Adrenal gland (tissue), 19 donors: ENCODE measurements at regions of chr10 and their contacts with region 1.

Region 1: GRCh38 chr10:119199231-119199992 is 8.0 kb upstream of the GRK5 start:
- DNase-seq: peak; percentile 66 to 86 (median 76)
- H3K4me3 ChIP-seq: no peak overlapping the region
- H3K27ac ChIP-seq: no peak overlapping the region
- H3K4me1 ChIP-seq: no peaks in the 10 kb centered on the region
- H3K27me3 ChIP-seq: no peaks in the 10 kb centered on the region
- CTCF ChIP-seq: peak; percentile 46 to 85 (median 76)
- POLR2A ChIP-seq: no peak

Region 2: DNA sequence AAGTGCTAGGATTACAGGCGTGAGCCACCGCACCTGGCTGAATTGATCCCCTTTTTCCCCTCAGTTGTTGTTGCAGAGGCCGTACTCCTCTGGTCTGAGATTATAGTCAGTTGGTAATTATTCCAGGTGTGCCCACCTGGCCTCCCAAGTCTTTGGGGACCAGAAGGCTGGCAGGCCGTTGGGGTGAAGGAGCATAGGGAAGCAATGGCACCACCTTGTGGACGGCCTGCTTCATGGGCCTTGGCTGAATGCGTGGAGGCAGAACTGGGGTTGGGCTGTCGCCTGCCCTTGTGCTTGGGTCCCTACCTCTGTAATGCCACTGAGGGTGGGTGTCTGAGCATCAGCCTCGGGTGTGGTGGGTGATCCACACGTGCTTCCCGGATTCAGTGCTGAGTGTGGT is 217.4 kb after region 1 on chr10:
- intact Hi-C with region 1: loop called in 1 of 2 experiments (anchors 5 kb)
- DNase-seq: peak; percentile 55 to 86 (median 67)
- H3K4me3 ChIP-seq: no peak overlapping the region
- H3K27ac ChIP-seq: no peak overlapping the region
- H3K4me1 ChIP-seq: peaks cover 22 to 32% of the 10 kb centered on the region in 2 donors
- H3K27me3 ChIP-seq: no peaks in the 10 kb centered on the region
- CTCF ChIP-seq: peak; percentile 43 to 83 (median 72)
- POLR2A ChIP-seq: no peak

Region 3: DNA sequence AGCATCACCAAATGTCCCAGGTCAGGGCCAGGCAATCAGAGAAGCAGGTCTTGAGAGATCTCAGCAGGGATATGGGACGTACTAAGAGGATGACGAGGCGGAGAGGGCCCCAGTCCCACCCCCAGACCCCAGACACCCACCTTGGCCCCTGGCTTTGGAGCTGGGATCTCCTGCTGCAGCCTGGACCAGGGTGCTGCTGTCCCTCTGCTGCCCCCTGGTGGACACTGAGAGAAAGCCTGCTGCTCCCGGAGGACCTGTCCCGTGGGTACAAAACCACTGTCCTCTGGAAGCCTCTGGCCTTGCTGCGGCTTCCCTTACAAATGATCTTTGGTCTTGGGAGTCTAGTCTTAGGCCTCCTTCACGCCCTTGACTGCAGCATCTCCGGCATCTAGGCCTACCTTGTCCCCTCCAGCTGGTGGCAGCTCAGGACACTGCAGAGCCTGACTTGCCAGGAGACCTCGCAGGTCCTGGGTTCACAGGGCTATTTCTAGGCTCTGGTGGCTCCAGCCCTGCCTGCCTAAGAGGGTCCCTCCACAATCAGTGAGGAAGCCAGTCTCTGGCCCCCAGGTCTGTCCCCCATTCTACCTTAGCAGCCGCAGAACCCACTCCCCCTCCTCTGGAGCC is 246.0 kb after region 1 on chr10:
- intact Hi-C with region 1: loop called (anchors 2 to 5 kb)
- DNase-seq: peak; percentile 80 to 93 (median 87)
- H3K4me3 ChIP-seq: no peak overlapping the region
- H3K27ac ChIP-seq: no peak overlapping the region
- H3K4me1 ChIP-seq: no peaks in the 10 kb centered on the region
- H3K27me3 ChIP-seq: no peaks in the 10 kb centered on the region
- CTCF ChIP-seq: peak; percentile 89 to 98 (median 92)
- POLR2A ChIP-seq: no peak

Region 4: GRCh38 chr10:119542988-119543813 is 343.8 kb after region 1 on chr10:
- intact Hi-C with region 1: no loop called
- DNase-seq: peak in 5 of 7 donors; percentile 20 to 35 (median 30)
- H3K4me3 ChIP-seq: peak overlapping the region in 2 of 4 donors; percentile 20 to 74
- H3K27ac ChIP-seq: peak overlapping the region in 2 of 5 donors; percentile 4 to 73
- H3K4me1 ChIP-seq: peaks cover 8 to 10% of the 10 kb centered on the region in 2 donors
- H3K27me3 ChIP-seq: peaks cover 7% of the 10 kb centered on the region
- CTCF ChIP-seq: peak in 2 of 6 experiments; percentile 10 to 22
- POLR2A ChIP-seq: no peak